ENCODE measurements at regions of chr19 and their contacts with region 1.

Region 1: GRCh38 chr19:48842789-48843162 is 6.5 kb upstream of the HSD17B14 start:
- DNase-seq: no peak
- ATAC-seq: peak; percentile 83
- H3K4me3 ChIP-seq: no peak overlapping the region
- H3K27ac ChIP-seq: no peak overlapping the region
- H3K4me1 ChIP-seq: no peaks in the 10 kb centered on the region
- H3K27me3 ChIP-seq: no peaks in the 10 kb centered on the region
- CTCF ChIP-seq: peak; percentile 75 to 85 (median 78)
- EP300 ChIP-seq: no peak
- POLR2A ChIP-seq: no peak
- RAD21 ChIP-seq: peak; percentile 79

Region 2: GRCh38 chr19:48674921-48675824 is 167.6 kb before region 1 on chr19:
- CTCF ChIA-PET with region 1: interaction called, 11 read pairs
- POLR2A ChIA-PET with region 1: no interaction called
- RAD21 ChIA-PET with region 1: interaction called, 5 read pairs
- SMC1A ChIA-PET with region 1: interaction called, 3 read pairs
- in situ Hi-C with region 1: no loop called
- intact Hi-C with region 1: no loop called
- DNase-seq: no peak
- ATAC-seq: peak; percentile 95
- H3K4me3 ChIP-seq: no peak overlapping the region
- H3K27ac ChIP-seq: no peak overlapping the region
- H3K4me1 ChIP-seq: no peaks in the 10 kb centered on the region
- H3K27me3 ChIP-seq: peaks cover 0 to 2% of the 10 kb centered on the region in 2 experiments; a peak in 2 of 4 replicates
- CTCF ChIP-seq: peak; percentile 81 to 89 (median 85)
- EP300 ChIP-seq: no peak
- POLR2A ChIP-seq: no peak
- RAD21 ChIP-seq: peak; percentile 64

Region 3: GRCh38 chr19:48772503-48772953 is 70.2 kb before region 1 on chr19:
- CTCF ChIA-PET with region 1: no interaction called
- POLR2A ChIA-PET with region 1: no interaction called
- RAD21 ChIA-PET with region 1: no interaction called
- SMC1A ChIA-PET with region 1: no interaction called
- in situ Hi-C with region 1: no loop called
- intact Hi-C with region 1: no loop called
- DNase-seq: no peak
- ATAC-seq: no peak
- H3K4me3 ChIP-seq: no peak overlapping the region
- H3K27ac ChIP-seq: no peak overlapping the region
- H3K4me1 ChIP-seq: no peaks in the 10 kb centered on the region
- H3K27me3 ChIP-seq: no peaks in the 10 kb centered on the region; a peak in 1 of 4 replicates
- CTCF ChIP-seq: no peak
- EP300 ChIP-seq: no peak
- POLR2A ChIP-seq: no peak
- RAD21 ChIP-seq: no peak

Region 4: DNA sequence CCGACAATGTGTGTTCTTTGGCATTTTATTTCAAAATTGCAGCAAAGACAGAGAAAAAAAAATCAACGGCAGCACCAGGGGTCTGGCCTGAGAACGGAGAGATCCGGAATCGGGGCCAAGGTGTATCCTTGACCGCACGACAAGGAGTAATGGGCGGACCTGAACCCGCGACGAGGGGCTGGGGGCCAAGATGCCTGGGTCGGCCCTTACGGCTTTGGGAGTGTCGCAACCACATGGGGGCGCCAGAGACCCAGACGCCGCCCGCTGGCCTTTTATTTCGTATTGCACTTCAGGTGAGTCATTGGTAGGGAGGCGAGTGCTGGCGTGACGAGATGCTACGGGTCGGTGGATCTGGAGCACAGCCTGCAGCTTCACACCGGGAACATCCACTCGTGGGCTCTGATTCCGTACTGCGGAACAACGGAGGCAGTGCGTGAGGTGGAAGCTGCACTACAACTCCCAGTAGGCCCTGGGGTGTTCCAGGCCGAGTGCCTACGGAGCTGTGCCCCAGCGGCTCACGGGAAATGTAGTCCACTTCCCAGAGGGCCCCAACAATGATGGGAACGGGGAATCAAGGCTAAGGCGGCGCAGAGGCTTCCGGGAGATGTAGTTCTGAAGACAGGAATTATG is 47.6 kb before region 1 on chr19:
- CTCF ChIA-PET with region 1: interaction called, 520 read pairs
- POLR2A ChIA-PET with region 1: interaction called, 7 read pairs
- RAD21 ChIA-PET with region 1: interaction called, 72 read pairs
- SMC1A ChIA-PET with region 1: interaction called, 41 read pairs
- in situ Hi-C with region 1: loop called (anchors 5 kb)
- intact Hi-C with region 1: no loop called
- DNase-seq: peak; percentile 76
- ATAC-seq: peak; percentile 98
- H3K4me3 ChIP-seq: peak overlapping the region; percentile 67; the same call in 1 of the 2 replicates
- H3K27ac ChIP-seq: no peak overlapping the region
- H3K4me1 ChIP-seq: peaks cover 6% of the 10 kb centered on the region
- H3K27me3 ChIP-seq: no peaks in the 10 kb centered on the region
- CTCF ChIP-seq: peak; percentile 87 to 93 (median 91); a peak in 5 of 6 replicates
- EP300 ChIP-seq: no peak; a peak in 1 of 4 replicates
- POLR2A ChIP-seq: peak; percentile 62
- RAD21 ChIP-seq: peak; percentile 84

Region 5: DNA sequence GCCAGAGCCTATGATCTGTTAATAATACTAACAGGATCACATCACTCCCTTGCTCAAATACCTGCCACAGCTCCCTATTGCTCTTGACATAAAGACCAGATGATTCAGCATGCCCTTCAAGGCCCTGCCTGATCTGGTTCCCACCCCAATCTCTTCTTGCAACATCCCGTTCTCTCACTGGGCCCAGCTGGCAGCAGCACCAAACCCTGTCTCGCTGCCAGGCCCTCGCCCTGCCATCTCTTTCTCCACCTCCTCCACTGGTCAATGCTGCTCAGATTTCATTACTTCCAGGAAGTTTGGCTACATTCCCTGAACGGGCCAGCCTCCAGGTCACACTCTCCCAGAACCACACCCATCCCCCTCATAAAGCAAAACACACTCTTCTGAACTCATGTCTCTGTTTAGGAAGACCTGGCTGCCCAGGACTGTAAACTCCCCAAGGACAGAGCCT is 23.4 kb before region 1 on chr19:
- CTCF ChIA-PET with region 1: interaction called, 12 read pairs
- POLR2A ChIA-PET with region 1: interaction called, 6 read pairs
- RAD21 ChIA-PET with region 1: no interaction called
- SMC1A ChIA-PET with region 1: no interaction called
- in situ Hi-C with region 1: no loop called
- intact Hi-C with region 1: no loop called
- DNase-seq: no peak
- ATAC-seq: no peak
- H3K4me3 ChIP-seq: no peak overlapping the region
- H3K27ac ChIP-seq: no peak overlapping the region
- H3K4me1 ChIP-seq: peaks cover 12% of the 10 kb centered on the region; the same call in 1 of the 2 replicates
- H3K27me3 ChIP-seq: no peaks in the 10 kb centered on the region
- CTCF ChIP-seq: no peak
- EP300 ChIP-seq: no peak
- POLR2A ChIP-seq: no peak
- RAD21 ChIP-seq: no peak

Region 6: DNA sequence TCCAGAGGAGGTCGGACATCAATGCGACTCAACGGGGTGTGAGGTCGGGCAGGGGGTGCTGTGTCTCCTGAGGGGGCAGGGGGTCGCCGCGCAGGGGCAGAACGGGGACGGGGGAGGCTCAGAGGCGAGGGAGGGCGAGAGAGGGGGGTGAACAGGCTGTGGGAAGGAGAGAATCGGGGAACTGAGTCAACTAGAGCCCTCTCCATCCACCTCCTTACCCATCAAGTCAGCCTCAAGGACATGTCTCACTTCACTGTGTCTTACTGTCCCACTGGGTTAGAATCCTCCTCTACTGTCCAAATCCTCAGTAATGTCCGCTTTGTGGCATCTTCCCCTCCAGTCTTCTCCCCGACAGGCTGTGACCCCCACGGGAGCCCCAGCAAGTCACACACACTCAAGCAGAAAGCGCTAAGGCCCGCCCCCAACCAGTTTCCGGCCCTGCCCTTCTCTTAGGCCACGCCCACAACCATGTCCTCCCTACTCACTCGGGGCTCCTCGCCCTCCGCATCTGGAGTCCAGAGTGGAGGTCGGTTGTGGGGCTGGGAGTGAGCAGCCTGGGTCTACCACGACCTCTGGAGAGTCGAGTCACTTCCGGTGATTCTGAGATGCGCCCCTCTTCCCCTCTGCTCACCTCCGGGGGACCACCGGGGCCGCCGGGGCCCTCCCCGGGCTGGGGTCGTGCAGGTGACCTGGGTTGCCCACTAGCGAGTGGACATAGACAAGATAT is 16.4 kb after region 1 on chr19:
- CTCF ChIA-PET with region 1: interaction called, 39 read pairs
- POLR2A ChIA-PET with region 1: no interaction called
- RAD21 ChIA-PET with region 1: interaction called, 3 read pairs
- SMC1A ChIA-PET with region 1: interaction called, 3 read pairs
- in situ Hi-C with region 1: no loop called
- intact Hi-C with region 1: no loop called
- DNase-seq: no peak
- ATAC-seq: peak; percentile 94
- H3K4me3 ChIP-seq: peak overlapping the region; percentile 65
- H3K27ac ChIP-seq: 0 out of 2 replicates have a peak overlapping the region, but pooled peaks have one; percentile 0
- H3K4me1 ChIP-seq: no peaks in the 10 kb centered on the region
- H3K27me3 ChIP-seq: no peaks in the 10 kb centered on the region
- CTCF ChIP-seq: no peak
- EP300 ChIP-seq: no peak
- POLR2A ChIP-seq: no peak; the same call in 1 of the 2 replicates
- RAD21 ChIP-seq: no peak

Region 7: DNA sequence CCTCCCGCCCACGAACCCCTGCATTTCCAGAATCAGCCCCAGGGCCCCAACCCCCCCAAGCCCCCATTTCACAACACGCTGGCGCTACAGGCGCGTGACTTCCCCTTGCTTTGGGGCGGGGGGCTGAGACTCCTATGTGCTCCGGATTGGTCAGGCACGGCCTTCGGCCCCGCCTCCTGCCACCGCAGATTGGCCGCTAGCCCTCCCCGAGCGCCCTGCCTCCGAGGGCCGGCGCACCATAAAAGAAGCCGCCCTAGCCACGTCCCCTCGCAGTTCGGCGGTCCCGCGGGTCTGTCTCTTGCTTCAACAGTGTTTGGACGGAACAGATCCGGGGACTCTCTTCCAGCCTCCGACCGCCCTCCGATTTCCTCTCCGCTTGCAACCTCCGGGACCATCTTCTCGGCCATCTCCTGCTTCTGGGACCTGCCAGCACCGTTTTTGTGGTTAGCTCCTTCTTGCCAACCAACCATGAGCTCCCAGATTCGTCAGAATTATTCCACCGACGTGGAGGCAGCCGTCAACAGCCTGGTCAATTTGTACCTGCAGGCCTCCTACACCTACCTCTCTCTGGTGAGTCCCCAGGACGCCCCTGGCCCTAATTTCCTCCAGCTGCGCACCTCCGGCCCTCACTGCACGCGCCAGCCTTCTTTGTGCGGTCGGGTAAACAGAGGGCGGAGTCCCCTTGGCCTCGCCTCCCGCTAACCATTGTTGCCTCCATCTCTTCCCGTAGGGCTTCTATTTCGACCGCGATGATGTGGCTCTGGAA is 122.4 kb after region 1 on chr19 and contains the start of gene FTL:
- CTCF ChIA-PET with region 1: interaction called, 113 read pairs
- POLR2A ChIA-PET with region 1: interaction called, 6 read pairs
- RAD21 ChIA-PET with region 1: interaction called, 28 read pairs
- SMC1A ChIA-PET with region 1: interaction called, 22 read pairs
- in situ Hi-C with region 1: no loop called
- intact Hi-C with region 1: loop called (anchors 2 kb)
- DNase-seq: peak; percentile 82
- ATAC-seq: peak; percentile 79
- H3K4me3 ChIP-seq: peak within 1 kb of the TSS; percentile 93
- H3K27ac ChIP-seq: peak within 1 kb of the TSS; percentile 84
- H3K4me1 ChIP-seq: peaks cover 41% of the 10 kb centered on the region
- H3K27me3 ChIP-seq: no peaks in the 10 kb centered on the region
- CTCF ChIP-seq: no peak
- EP300 ChIP-seq: no peak
- POLR2A ChIP-seq: peak; percentile 95
- RAD21 ChIP-seq: no peak
- polyA plus RNA-seq, gene FTL: 5,502 to 8,913 TPM

Region 8: GRCh38 chr19:48975947-48976847 is 133.4 kb after region 1 on chr19:
- CTCF ChIA-PET with region 1: interaction called, 113 read pairs
- POLR2A ChIA-PET with region 1: interaction called, 3 read pairs
- RAD21 ChIA-PET with region 1: interaction called, 28 read pairs
- SMC1A ChIA-PET with region 1: interaction called, 22 read pairs
- in situ Hi-C with region 1: no loop called
- intact Hi-C with region 1: loop called (anchors 2 kb)
- DNase-seq: no peak
- ATAC-seq: peak; percentile 69
- H3K4me3 ChIP-seq: no peak overlapping the region
- H3K27ac ChIP-seq: no peak overlapping the region
- H3K4me1 ChIP-seq: peaks cover 4% of the 10 kb centered on the region
- H3K27me3 ChIP-seq: no peaks in the 10 kb centered on the region
- CTCF ChIP-seq: no peak
- EP300 ChIP-seq: no peak
- POLR2A ChIP-seq: no peak
- RAD21 ChIP-seq: no peak